Prostate gland (tissue), 2 donors: ENCODE measurements at regions of chr18 and their contacts with region 1.

Region 1: GRCh38 chr18:22563098-22563707 is 145.5 kb upstream of the CTAGE1 start:
- DNase-seq: peak; percentile 59
- H3K4me3 ChIP-seq: no peak overlapping the region
- H3K27ac ChIP-seq: no peak overlapping the region
- H3K4me1 ChIP-seq: no peaks in the 10 kb centered on the region
- H3K27me3 ChIP-seq: no peaks in the 10 kb centered on the region
- CTCF ChIP-seq: peak; percentile 42 to 83 (median 77)
- POLR2A ChIP-seq: no peak

Region 2: GRCh38 chr18:21897811-21898210 is 665.4 kb before region 1 on chr18:
- intact Hi-C with region 1: loop called (anchors 5 kb)
- DNase-seq: peak; percentile 22
- H3K4me3 ChIP-seq: no peak overlapping the region
- H3K27ac ChIP-seq: no peak overlapping the region
- H3K4me1 ChIP-seq: no peaks in the 10 kb centered on the region
- H3K27me3 ChIP-seq: no peaks in the 10 kb centered on the region
- CTCF ChIP-seq: peak; percentile 39 to 60 (median 50)
- POLR2A ChIP-seq: no peak

Region 3: DNA sequence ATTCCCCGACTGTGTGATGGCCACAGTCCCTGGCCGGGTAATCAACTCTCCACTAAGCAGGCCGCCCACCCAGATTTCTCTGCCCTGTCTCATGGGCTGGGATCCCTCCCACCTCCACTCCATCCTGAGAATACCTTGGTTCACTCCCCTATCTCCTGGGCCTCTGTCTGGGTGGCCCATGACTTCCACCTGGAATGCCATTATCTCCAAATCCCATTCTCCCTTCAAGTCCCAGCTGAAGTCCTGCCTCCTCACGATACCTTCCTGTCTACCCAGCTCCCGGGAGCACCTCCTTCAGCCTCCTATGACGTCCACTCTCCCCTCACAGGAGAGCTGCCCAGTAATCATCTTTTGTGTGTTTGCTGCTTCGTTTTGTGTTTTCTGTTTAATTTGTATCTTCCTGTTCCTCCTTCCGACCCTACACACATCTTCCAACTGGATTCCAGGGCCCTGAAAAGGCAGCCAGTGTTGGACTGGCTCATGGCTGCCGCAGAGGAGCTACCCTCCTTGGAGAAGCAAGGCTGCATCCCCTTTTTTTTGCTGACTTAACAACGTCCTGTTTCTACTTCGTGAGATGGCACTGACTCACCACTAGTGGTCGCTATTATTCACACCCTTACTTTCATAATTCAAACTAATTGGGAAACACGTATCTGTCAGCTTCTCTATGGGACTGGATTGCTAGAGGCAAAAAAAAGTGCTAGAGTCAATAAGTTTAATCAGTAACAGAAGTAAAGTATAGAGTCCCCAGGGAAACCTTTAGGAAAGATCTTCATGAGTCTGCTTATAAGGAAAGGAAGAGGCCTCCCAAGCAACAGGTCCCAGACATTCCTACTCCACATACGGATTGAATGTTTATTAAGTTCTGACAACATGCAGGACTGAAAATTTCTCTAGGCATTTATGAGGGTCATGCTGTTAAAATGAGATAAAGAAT is 565.7 kb before region 1 on chr18:
- intact Hi-C with region 1: loop called (anchors 5 kb)
- DNase-seq: no peak
- H3K4me3 ChIP-seq: no peak overlapping the region
- H3K27ac ChIP-seq: no peak overlapping the region
- H3K4me1 ChIP-seq: no peaks in the 10 kb centered on the region
- H3K27me3 ChIP-seq: no peaks in the 10 kb centered on the region
- CTCF ChIP-seq: peak; percentile 17 to 59 (median 52)
- POLR2A ChIP-seq: no peak

Region 4: DNA sequence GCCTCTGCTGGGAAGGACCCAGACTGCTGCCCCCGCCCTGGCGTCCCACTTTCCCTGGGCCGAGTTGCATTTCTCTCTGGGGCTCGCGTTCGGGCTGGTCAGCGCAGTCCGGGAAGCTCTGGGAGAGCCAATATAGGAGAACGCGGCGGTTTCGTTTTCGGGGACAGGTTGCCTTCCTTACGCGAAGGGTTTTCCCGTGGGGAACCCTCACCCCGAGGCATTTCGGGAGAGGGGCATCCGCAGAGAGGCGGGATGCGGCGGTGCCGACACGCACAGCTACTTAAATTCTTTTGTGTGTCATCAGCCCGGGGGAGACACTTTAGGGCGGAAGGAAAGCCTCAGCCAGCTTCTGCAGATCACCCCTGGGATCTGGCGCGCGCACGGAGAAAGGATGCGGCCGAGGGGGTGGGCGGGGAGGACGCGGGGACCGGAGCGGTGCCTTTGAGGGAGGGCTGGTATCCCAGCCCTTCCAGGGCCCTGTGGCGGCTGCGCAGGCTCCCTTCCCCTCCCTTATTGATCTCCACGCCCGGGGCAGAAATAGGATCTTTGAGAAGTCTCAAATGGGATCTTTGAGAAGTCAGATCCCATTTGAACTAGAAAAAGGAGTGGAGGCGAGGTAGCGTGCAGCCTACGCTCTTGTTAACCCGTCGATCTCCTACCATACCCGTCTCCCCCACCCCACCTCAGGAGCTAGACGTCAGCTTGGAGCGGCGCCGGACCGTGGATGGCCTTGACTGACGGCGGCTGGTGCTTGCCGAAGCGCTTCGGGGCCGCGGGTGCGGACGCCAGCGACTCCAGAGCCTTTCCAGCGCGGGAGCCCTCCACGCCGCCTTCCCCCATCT is 392.6 kb before region 1 on chr18:
- intact Hi-C with region 1: loop called (anchors 5 kb)
- DNase-seq: peak; percentile 54
- H3K4me3 ChIP-seq: peak overlapping the region; percentile 54 to 62
- H3K27ac ChIP-seq: peak overlapping the region; percentile 66 to 79
- H3K4me1 ChIP-seq: peaks cover 9% of the 10 kb centered on the region
- H3K27me3 ChIP-seq: peaks cover 29% of the 10 kb centered on the region
- CTCF ChIP-seq: no peak
- POLR2A ChIP-seq: no peak

Region 5: DNA sequence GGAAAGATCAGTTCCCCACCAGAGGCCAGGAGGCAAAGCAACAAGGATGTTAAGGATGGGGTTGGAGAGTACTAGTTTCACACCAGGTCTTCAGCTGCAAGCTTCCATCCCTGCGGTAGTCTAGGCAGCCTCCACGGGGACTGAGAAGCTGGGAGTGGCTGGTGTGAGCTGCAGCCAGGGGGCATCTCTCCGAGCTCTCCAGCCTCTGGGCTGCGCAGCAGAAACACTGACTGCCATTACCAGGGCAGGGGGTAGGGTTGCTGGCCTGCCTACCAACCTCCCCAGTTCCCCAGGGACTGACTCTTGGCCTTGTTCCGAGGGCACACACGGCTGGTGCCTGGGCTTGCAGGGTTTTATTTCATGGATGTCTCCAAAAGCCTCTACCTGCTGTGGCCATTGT is 377.9 kb before region 1 on chr18:
- intact Hi-C with region 1: loop called (anchors 5 kb)
- DNase-seq: no peak
- H3K4me3 ChIP-seq: no peak overlapping the region
- H3K27ac ChIP-seq: no peak overlapping the region
- H3K4me1 ChIP-seq: no peaks in the 10 kb centered on the region
- H3K27me3 ChIP-seq: no peaks in the 10 kb centered on the region
- CTCF ChIP-seq: no peak
- POLR2A ChIP-seq: no peak

Region 6: DNA sequence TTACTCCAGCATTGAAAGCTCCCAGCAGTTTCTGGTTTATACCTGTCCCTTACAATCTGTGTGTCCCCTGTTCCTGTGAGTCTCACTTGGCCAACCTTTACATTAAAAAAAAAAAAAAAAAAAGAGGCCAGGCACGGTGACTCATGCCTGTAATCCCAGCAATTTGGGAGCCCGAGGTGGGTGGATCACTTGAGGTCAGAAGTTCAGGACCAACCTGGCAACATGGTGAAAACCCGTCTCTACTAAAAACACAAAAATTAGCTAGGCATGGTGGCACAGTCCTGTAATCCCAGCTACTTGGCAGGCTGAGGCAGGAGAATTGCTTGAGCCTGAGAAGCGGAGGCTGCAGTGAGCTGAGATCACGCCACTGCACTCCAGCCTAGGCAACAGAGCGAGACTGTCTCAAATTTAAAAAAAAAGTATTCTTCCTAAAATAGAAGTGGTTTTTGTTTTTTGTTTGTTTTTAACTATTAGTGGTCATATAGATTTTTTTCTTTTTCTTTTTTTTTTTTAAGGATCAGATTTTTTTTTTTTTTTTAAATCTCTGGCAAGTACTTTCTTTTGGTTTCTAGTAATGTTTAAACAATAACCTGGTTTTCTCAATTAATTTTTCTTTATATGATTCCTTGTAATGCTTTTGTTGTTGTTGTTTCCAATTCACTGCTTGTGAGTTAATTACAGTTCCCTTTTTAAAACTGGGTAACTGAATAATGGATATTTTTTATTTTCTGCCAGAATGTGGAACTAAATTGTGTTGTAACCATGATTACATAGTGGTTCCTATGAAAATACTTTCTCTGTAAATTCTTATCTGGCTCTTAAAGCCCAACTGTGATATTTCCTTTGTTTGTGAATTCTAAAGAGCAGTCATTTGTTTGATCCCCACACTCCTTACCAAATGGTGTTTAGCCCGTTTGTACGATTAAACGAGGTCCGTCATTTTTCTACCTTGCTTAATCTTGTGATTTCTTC is 262.3 kb before region 1 on chr18:
- intact Hi-C with region 1: no loop called
- DNase-seq: no peak
- H3K4me3 ChIP-seq: no peak overlapping the region
- H3K27ac ChIP-seq: no peak overlapping the region
- H3K4me1 ChIP-seq: no peaks in the 10 kb centered on the region
- H3K27me3 ChIP-seq: no peaks in the 10 kb centered on the region
- CTCF ChIP-seq: no peak
- POLR2A ChIP-seq: no peak

Region 7: DNA sequence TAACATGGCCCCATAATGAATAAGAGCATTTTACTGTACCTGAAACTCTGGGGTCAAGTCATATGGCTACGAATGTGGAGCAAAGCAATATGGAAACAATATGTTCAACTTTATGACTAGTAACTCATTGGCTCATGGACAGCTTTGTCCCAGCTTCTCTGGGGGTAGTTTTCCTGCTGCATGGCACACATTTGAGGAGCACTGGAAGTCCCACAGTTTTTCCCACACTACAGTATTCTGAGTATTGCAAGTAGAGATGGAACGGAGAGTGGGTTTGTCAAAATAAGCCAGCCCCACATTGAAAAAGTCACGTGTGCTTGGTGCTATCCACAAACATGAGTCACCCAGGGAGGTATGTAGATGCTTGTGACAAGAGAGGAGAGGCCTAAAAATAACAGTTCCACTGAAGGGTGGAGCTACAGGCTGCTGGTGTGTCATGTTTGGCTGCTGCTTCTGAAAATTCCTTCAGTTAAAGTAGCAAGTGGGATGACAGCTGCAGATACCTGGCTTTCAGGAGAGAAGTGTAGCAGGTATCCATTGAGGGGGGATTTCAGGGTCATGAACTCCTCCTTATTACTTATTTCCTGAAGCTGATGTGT is 97.2 kb before region 1 on chr18:
- intact Hi-C with region 1: loop called (anchors 5 kb)
- DNase-seq: peak; percentile 34
- H3K4me3 ChIP-seq: no peak overlapping the region
- H3K27ac ChIP-seq: no peak overlapping the region
- H3K4me1 ChIP-seq: peaks cover 8% of the 10 kb centered on the region
- H3K27me3 ChIP-seq: no peaks in the 10 kb centered on the region
- CTCF ChIP-seq: no peak
- POLR2A ChIP-seq: no peak

Region 8: DNA sequence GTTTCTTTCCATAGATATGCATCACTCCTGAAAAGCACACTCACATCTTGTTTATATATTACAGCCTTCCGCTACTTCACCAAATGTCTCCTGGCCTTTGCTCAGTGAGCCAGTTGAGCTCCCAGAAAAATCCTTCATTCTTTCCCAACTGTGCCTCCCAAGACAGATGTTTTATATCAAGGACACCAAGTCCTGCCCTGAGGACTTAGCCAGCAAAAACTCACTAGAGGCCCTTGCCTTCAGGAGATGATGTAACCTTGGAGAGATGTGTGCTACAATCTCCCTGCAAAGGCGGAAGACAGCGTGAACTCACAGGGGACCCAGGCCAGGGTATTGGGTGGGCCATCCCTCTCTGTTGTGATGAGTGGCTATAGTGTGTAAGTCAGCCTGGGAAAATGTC is 59.4 kb before region 1 on chr18:
- intact Hi-C with region 1: no loop called
- DNase-seq: no peak
- H3K4me3 ChIP-seq: no peak overlapping the region
- H3K27ac ChIP-seq: no peak overlapping the region
- H3K4me1 ChIP-seq: no peaks in the 10 kb centered on the region
- H3K27me3 ChIP-seq: no peaks in the 10 kb centered on the region
- CTCF ChIP-seq: no peak
- POLR2A ChIP-seq: no peak

Region 9: GRCh38 chr18:22683196-22683676 is 120.0 kb after region 1 on chr18:
- intact Hi-C with region 1: loop called (anchors 10 kb)
- DNase-seq: peak; percentile 27
- H3K4me3 ChIP-seq: no peak overlapping the region
- H3K27ac ChIP-seq: no peak overlapping the region
- H3K4me1 ChIP-seq: no peaks in the 10 kb centered on the region
- H3K27me3 ChIP-seq: no peaks in the 10 kb centered on the region
- CTCF ChIP-seq: no peak
- POLR2A ChIP-seq: no peak

Region 10: GRCh38 chr18:23776306-23776705 is 1213.1 kb after region 1 on chr18:
- intact Hi-C with region 1: no loop called
- DNase-seq: no peak
- H3K4me3 ChIP-seq: no peak overlapping the region
- H3K27ac ChIP-seq: no peak overlapping the region
- H3K4me1 ChIP-seq: no peaks in the 10 kb centered on the region
- H3K27me3 ChIP-seq: no peaks in the 10 kb centered on the region
- CTCF ChIP-seq: no peak
- POLR2A ChIP-seq: no peak